CD4-positive, alpha-beta memory T cell (primary cell): ENCODE measurements at regions of chr2 and their contacts with region 1.

Region 1: DNA sequence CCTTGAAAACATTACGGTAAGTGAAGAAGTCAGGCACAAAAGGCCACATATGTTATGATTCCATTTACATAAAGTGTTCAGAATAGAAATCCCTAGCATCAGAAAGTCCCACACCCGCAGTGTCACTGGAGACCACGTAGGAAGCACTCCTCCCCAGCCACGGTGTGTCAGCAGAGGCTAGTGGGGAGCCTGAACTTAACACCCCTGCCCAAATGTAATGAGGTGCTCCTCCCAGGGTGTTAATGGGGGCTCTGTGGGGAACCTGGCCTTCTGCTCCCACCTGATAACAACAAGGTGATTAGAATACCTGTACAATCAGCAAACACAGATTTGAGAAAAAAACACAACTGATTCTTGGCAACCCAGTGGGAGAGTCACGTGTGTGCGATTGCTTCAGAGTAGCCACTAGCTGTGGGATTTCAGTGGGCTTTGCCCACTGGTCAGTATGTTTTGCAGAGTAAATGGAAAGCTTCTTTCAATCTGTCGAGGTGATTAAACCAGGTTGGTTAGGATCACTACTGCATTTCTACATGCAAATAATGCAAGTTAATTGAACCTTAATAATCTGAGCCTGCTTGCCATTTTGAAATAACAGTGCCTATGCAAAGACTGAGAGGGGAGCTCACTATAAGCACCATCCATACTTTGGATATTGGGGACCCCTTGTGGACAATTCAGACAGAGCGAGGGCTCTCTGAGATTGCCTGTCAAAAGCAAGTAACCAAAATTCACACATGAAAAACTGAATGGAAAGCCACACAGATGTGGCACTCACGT is 20.6 kb upstream of the ATRAID start:
- DNase-seq: peak; percentile 44 to 61 (median 55)
- H3K4me3 ChIP-seq: no peak overlapping the region
- H3K4me3 Mint-ChIP-seq: no peak overlapping the region
- H3K27ac ChIP-seq: no peak overlapping the region
- H3K27ac Mint-ChIP-seq: no peak overlapping the region
- H3K4me1 ChIP-seq: no peaks in the 10 kb centered on the region
- H3K4me1 Mint-ChIP-seq: no peaks in the 10 kb centered on the region
- H3K27me3 ChIP-seq: no peaks in the 10 kb centered on the region
- H3K27me3 Mint-ChIP-seq: peaks cover 3 to 12% of the 10 kb centered on the region in 2 donors

Region 2: DNA sequence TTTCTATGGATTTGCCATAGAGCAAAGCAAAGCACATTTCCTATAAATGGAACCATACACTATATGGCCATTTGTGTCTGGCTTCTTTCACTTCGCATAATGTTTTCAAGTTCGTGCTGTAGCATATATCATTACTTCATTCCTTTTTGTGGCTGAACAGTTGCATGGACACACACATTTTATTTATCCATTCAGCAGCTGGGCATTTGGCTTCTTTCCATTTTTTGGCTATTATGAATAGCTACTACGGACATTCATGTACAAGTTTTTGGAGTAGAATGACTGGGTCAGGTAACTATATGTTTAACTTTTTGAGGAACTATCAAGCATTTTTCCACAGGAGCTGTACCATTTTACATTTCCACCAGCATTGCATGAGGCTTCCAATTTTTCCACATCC is 856.0 kb before region 1 on chr2:
- CTCF ChIA-PET with region 1: no interaction called
- POLR2A ChIA-PET with region 1: no interaction called
- intact Hi-C with region 1: no loop called
- DNase-seq: no peak
- H3K4me3 ChIP-seq: no peak overlapping the region
- H3K4me3 Mint-ChIP-seq: no peak overlapping the region
- H3K27ac ChIP-seq: no peak overlapping the region
- H3K27ac Mint-ChIP-seq: no peak overlapping the region
- H3K4me1 ChIP-seq: peaks cover 3% of the 10 kb centered on the region
- H3K4me1 Mint-ChIP-seq: peaks cover 2 to 5% (median 2%) of the 10 kb centered on the region in 4 donors
- H3K27me3 ChIP-seq: no peaks in the 10 kb centered on the region
- H3K27me3 Mint-ChIP-seq: no peaks in the 10 kb centered on the region

Region 3: DNA sequence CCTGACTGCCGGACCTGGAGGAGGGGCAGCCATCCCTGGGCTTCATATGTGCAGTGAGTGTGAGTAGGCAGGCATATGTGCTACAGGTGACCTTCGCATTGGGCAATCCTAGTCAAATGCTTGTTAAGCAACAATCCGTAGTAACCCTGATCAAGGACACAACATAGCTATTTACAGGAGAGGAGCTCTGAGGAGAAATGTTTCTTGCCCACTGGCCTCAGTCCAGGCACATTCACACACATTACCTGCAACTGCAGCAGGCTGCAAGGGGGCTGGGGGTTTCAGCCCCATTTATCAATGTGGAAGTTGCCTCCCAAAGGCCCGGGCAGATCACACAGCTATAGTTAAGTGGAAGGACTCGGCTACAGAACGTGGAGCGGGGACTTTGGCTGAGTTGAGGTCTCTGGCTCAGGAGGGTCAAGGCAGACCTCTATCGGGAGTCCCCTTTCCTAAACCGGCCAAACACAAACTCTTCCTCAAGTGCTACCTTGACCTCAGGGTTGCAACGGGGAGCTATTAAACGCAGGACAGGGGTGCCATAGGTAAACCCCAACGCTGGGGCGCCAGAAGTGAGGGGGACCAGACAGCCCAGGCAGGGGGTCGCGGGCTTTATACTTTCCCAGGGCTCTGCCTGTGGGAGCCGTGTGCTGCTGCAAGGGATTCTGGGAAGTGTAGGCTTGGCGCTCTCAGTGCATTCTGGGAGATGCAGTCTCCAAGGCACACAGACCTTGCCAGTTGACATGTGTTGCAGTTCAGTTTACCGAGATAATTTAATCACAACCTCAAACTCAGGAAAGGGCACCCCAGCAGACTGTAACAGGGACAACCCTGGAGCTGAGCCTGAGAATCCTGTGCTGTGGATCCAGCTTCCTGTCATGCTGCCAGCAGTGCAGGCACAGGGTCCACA is 95.2 kb before region 1 on chr2:
- CTCF ChIA-PET with region 1: interaction called, 20 read pairs
- POLR2A ChIA-PET with region 1: no interaction called
- intact Hi-C with region 1: loop called (anchors 1 kb)
- DNase-seq: peak in 3 of 5 donors; percentile 34 to 39 (median 37)
- H3K4me3 ChIP-seq: no peak overlapping the region
- H3K4me3 Mint-ChIP-seq: peak overlapping the region in 7 of 8 donors; percentile 5 to 81 (median 61)
- H3K27ac ChIP-seq: no peak overlapping the region
- H3K27ac Mint-ChIP-seq: peak overlapping the region in 4 of 7 donors; percentile 35 to 84 (median 53)
- H3K4me1 ChIP-seq: peaks cover 9% of the 10 kb centered on the region
- H3K4me1 Mint-ChIP-seq: peaks cover 8 to 16% (median 10%) of the 10 kb centered on the region in 4 donors
- H3K27me3 ChIP-seq: no peaks in the 10 kb centered on the region
- H3K27me3 Mint-ChIP-seq: no peaks in the 10 kb centered on the region

Region 4: GRCh38 chr2:27102329-27102728 is 88.9 kb before region 1 on chr2:
- CTCF ChIA-PET with region 1: interaction called, 20 read pairs
- POLR2A ChIA-PET with region 1: no interaction called
- intact Hi-C with region 1: loop called (anchors 1 kb)
- DNase-seq: no peak
- H3K4me3 ChIP-seq: no peak overlapping the region
- H3K4me3 Mint-ChIP-seq: no peak overlapping the region
- H3K27ac ChIP-seq: no peak overlapping the region
- H3K27ac Mint-ChIP-seq: no peak overlapping the region
- H3K4me1 ChIP-seq: no peaks in the 10 kb centered on the region
- H3K4me1 Mint-ChIP-seq: peaks cover 0 to 3% (median 0%) of the 10 kb centered on the region in 4 donors
- H3K27me3 ChIP-seq: no peaks in the 10 kb centered on the region
- H3K27me3 Mint-ChIP-seq: peaks cover 4 to 8% of the 10 kb centered on the region in 2 donors